Sigmoid colon (tissue), 7 donors: ENCODE measurements at regions of chr7 and their contacts with region 1.

Region 1: DNA sequence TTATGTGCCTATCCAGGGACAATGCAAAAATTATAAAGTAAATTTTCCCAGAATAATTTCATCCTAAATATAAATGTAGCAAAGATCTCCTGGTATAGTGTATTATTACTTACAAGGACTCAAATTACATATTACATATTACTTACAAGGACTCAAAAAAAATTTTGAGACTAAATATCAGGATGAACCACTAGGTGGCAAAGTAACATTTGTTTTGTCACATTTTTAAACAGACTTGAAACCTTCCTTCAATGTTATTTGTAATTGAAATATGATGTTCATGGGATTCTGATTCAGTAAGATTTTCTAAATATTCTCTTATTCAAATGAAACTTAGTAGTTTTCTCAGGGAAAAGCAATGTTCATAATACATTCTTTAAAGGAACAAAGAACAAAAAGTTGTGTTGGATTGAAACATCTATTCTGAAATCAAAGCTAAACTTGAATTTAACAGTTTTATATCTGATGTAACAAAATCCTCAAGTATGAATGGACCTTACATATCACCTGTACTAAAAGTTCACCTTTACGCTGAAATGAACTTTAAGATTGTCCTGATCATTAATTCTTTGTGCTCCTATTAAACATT is 74.3 kb upstream of the GNAI1 start:
- DNase-seq: no peak
- H3K4me3 ChIP-seq: no peak overlapping the region
- H3K27ac ChIP-seq: no peak overlapping the region
- H3K4me1 ChIP-seq: no peaks in the 10 kb centered on the region
- H3K27me3 ChIP-seq: no peaks in the 10 kb centered on the region
- CTCF ChIP-seq: peak in 3 of 4 experiments; percentile 16 to 55 (median 25)
- EP300 ChIP-seq: no peak
- POLR2A ChIP-seq: no peak

Region 2: DNA sequence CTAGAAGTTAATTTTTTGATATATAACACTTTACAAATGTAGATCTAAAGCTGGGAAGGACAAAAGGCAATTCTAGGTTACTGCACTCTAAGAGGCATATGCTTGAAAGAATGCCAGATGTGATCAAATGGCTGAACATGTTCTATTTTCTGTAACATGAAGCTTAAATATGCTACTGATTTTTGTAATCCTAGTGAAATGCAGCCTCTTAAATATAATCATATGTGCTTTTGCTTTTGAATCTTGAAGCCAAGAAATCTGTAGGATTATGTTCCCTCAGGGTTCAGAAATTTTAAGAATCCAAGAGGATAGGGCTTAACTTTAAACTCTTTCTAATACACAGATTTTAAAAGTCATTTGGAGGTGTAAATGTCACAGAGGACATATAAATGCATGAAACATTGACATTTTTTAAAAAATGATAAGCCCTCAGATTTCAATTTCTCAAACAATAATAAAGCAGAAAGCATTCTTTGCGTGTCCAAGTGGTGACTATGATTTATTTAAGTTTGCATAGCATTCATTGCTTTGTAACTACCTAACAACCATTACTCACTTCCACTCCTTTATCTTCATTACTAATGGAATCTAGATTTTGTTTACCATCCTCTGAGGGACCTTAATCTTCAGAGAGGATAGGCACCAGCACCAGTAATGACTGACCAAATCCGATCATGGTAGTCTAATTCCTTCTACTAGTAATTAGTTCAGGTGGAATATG is 777.3 kb before region 1 on chr7:
- intact Hi-C with region 1: no loop called
- DNase-seq: no peak
- H3K4me3 ChIP-seq: no peak overlapping the region
- H3K27ac ChIP-seq: no peak overlapping the region
- H3K4me1 ChIP-seq: peaks cover 0 to 30% (median 15%) of the 10 kb centered on the region in 4 donors
- H3K27me3 ChIP-seq: no peaks in the 10 kb centered on the region
- CTCF ChIP-seq: no peak
- EP300 ChIP-seq: no peak
- POLR2A ChIP-seq: no peak

Region 3: GRCh38 chr7:80127412-80128150 is 67.3 kb after region 1 on chr7:
- intact Hi-C with region 1: no loop called
- DNase-seq: no peak
- H3K4me3 ChIP-seq: no peak overlapping the region
- H3K27ac ChIP-seq: no peak overlapping the region
- H3K4me1 ChIP-seq: no peaks in the 10 kb centered on the region
- H3K27me3 ChIP-seq: no peaks in the 10 kb centered on the region
- CTCF ChIP-seq: no peak
- EP300 ChIP-seq: no peak
- POLR2A ChIP-seq: no peak

Region 4: GRCh38 chr7:80288175-80289122 is 228.1 kb after region 1 on chr7:
- intact Hi-C with region 1: loop called (anchors 5 kb)
- DNase-seq: no peak
- H3K4me3 ChIP-seq: no peak overlapping the region
- H3K27ac ChIP-seq: no peak overlapping the region
- H3K4me1 ChIP-seq: peaks cover 0 to 17% (median 11%) of the 10 kb centered on the region in 4 donors
- H3K27me3 ChIP-seq: no peaks in the 10 kb centered on the region
- CTCF ChIP-seq: no peak
- EP300 ChIP-seq: no peak
- POLR2A ChIP-seq: no peak

Region 5: GRCh38 chr7:80392229-80393169 is 332.2 kb after region 1 on chr7:
- intact Hi-C with region 1: loop called (anchors 5 kb)
- DNase-seq: no peak
- H3K4me3 ChIP-seq: no peak overlapping the region
- H3K27ac ChIP-seq: no peak overlapping the region
- H3K4me1 ChIP-seq: peaks cover 0 to 4% (median 0%) of the 10 kb centered on the region in 4 donors
- H3K27me3 ChIP-seq: no peaks in the 10 kb centered on the region
- CTCF ChIP-seq: peak; percentile 17 to 57 (median 44)
- EP300 ChIP-seq: no peak
- POLR2A ChIP-seq: no peak

Region 6: DNA sequence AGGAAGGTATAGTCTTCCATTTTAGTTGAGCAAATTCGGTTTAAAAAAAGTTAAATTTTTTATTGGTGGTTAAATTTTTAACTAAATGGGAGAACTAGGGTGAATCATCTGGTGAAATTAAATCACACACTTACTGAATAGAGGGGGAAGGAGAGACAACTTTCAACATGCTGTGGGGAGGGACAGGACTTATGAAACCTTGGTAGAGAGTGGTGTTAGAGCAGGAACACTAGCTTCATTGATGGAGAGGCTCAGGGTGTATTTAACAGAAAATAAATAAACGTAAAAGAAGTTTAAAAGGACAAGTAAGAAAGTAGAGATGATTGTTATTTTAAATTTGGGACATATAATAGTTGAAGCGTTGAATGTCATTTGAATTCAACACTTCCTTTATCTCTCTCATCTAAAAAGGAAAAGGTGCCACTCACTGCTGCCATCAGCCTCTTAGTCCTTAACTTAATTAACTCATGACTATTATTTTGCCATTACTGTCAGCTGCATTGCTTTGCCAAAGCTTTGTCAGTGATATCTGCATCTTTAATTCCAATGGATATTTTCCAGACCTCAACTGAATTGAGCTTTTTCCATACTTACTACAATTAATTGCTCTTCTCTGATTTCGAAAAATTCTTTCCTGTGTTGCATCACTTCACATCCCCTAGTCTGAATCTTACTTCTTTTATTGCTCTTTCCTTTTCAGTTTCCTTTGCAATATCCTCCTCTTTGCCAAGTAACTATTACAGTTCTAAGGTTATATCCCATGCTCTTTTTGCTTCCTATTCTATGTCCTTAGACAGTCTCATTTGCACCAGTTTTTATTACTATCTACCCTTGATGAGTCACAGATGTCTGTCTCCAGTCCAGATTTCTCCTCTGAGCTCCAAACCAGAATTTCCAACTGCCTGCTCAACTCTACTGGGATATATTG is 379.8 kb after region 1 on chr7:
- intact Hi-C with region 1: loop called (anchors 5 kb)
- DNase-seq: no peak
- H3K4me3 ChIP-seq: no peak overlapping the region
- H3K27ac ChIP-seq: peak overlapping the region in 1 of 4 donors; percentile 20
- H3K4me1 ChIP-seq: peaks cover 0 to 20% (median 17%) of the 10 kb centered on the region in 4 donors
- H3K27me3 ChIP-seq: no peaks in the 10 kb centered on the region
- CTCF ChIP-seq: no peak
- EP300 ChIP-seq: no peak
- POLR2A ChIP-seq: no peak